Heart right ventricle (tissue), 16 donors: ENCODE measurements at regions of chr11 and their contacts with region 1.

Region 1: DNA sequence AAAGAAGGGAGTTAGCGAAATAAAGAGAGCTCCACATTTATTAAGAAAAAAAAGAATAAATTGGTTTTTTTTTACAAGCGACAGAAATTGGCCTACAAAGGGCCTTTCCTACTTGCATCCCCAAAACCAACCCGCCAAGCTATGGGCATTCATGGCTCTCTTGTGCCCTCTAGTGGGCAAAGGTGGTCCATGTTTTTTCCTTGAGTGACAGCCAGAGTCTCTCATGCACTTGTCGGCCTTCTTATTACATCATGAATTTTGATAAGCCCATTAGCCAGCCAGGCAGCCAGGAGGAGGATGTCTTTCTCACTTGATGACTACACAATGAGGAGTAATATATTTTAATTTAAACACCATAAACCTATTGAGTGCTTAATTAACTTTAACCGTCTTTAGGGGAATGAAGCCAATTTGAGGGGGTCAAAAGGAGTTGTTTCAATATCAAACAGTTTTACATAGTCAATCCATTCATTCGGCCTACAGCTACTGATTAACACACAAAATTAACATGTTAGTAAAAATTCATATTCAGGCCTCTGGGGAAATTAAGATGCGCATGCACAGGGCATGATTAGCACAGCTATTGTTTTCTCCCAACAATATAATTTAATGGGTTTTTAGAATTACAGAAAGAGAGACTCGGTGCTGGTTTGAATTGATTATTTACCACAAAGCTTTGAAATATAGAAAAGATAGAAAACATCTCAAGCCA is 85.5 kb downstream of the RCN1 start:
- DNase-seq: peak; percentile 27 to 82
- ATAC-seq: peak; percentile 52 to 80 (median 64)
- H3K4me3 ChIP-seq: no peak overlapping the region
- H3K27ac ChIP-seq: no peak overlapping the region
- H3K4me1 ChIP-seq: peaks cover 0 to 15% (median 5%) of the 10 kb centered on the region in 9 donors
- H3K27me3 ChIP-seq: peaks cover 0 to 10% (median 0%) of the 10 kb centered on the region in 7 donors
- CTCF ChIP-seq: peak; percentile 77 to 97 (median 89)

Region 2: DNA sequence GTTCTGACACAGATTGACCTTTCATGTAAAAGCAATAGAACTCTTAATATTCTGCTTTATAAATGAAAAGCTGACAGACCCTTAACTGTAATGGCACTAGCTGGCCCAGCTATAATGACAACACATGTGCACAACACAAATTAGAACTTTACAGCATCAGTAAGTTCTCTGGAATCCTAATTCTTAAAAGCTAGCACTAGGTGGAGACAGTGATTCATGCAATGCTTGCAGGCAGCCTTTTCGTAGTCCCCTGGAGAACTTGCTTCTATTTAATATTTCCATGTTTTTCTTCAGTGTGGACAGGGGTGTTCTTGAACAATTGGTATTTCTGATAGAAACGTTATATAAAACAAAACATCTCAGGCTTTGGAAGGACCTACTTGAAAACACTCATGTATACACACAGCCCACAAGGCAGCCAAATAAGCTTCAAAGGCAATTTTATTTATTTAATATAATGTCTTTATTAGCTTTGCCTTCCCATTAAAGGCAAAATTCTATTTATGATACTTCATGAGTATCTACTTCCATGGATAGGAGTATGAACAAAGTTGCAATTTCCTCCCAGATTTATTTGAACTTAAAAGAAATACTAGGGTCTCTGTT is 1215.9 kb before region 1 on chr11:
- intact Hi-C with region 1: loop called in 2 of 10 experiments (anchors 10 kb)
- DNase-seq: no peak
- ATAC-seq: peak in 1 of 8 donors; percentile 25
- H3K4me3 ChIP-seq: no peak overlapping the region
- H3K27ac ChIP-seq: no peak overlapping the region
- H3K4me1 ChIP-seq: no peaks in the 10 kb centered on the region
- H3K27me3 ChIP-seq: peaks cover 0 to 7% (median 0%) of the 10 kb centered on the region in 7 donors
- CTCF ChIP-seq: peak; percentile 15 to 73 (median 49)

Region 3: DNA sequence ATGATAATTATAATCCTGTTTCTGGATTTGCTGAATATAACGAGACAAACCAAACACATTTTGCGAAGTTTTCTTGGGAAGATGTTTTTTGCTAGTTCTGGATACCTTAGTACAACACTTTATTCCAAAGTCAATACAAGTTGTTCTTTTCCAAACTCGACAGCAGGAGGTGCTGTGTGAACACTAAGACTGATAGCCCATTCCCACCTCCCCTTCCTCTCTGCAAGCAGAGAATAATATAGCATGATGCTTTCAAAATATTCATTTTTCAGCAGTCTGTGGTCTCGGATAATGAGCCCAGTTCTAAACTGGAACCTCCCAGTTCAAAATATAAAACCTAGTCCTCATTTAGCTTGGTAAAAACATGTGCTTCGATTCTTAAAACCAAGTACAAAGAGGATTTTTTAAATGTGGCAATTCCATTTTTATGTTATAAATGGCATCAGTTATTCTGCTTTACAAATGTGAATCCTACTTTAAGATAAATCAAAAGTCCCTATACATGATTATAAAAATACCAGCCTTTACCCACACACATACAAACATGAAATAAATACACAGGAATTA is 936.0 kb before region 1 on chr11:
- intact Hi-C with region 1: loop called in 7 of 10 experiments (anchors 2 to 10 kb)
- DNase-seq: peak in 1 of 2 donors; percentile 9
- ATAC-seq: peak in 1 of 8 donors; percentile 53
- H3K4me3 ChIP-seq: no peak overlapping the region
- H3K27ac ChIP-seq: no peak overlapping the region
- H3K4me1 ChIP-seq: no peaks in the 10 kb centered on the region
- H3K27me3 ChIP-seq: no peaks in the 10 kb centered on the region
- CTCF ChIP-seq: peak in 7 of 9 donors; percentile 44 to 66 (median 59)

Region 4: DNA sequence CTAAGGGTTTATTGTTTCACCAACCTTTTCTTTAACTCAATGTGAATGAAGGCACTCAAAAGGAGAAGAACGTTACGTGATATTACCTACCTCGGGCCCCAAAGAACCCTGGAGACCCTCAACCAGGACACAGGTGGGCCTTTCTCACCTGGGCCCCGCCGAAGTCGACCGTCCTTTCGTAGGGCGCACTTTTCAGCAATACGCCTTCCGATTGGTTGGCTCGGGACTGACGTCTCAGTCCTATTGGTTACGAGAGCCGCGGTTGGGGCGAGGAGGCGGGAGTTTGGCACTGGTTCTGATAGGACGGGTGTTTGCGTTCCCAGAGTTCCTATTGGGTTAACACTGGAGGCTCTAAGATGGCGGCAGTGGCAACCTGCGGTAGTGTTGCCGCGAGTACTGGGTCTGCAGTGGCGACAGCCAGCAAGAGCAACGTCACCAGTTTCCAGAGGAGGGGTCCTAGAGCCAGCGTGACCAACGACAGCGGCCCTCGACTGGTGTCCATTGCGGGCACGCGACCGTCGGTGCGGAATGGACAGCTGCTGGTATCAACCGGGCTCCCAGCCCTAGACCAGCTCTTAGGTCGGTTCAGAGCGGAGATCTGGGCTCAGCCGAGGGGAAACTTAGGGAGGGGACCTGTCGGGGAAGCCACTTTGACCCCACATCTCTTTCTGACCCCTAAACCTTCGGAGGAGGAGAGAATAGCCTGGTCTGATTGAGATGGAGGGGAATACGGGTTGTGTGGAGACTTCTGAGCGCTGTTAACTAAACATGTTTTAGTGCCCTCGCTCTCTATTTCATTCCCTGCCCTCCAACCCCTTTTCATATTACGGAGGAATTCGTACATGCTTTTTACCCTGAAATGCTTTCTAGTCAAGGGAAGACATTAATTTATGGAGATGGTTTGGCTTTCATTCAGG is 666.7 kb before region 1 on chr11 and contains the starts of genes ELP4 and IMMP1L:
- intact Hi-C with region 1: loop called in 1 of 10 experiments (anchors 10 kb)
- DNase-seq: peak; percentile 92 to 98
- ATAC-seq: peak; percentile 100
- H3K4me3 ChIP-seq: peak within 1 kb of the TSS; percentile 68 to 95 (median 81)
- H3K27ac ChIP-seq: peak within 1 kb of the TSS; percentile 37 to 89 (median 84)
- H3K4me1 ChIP-seq: peaks cover 0 to 29% (median 24%) of the 10 kb centered on the region in 9 donors
- H3K27me3 ChIP-seq: no peaks in the 10 kb centered on the region
- CTCF ChIP-seq: no peak
- total RNA-seq, gene ELP4: 13.4 to 19.5 (median 15.9) TPM
- total RNA-seq, gene IMMP1L: 19.5 to 32.4 (median 28.8) TPM

Region 5: GRCh38 chr11:32065865-32066264 is 110.5 kb before region 1 on chr11:
- intact Hi-C with region 1: no loop called
- DNase-seq: no peak
- ATAC-seq: no peak
- H3K4me3 ChIP-seq: no peak overlapping the region
- H3K27ac ChIP-seq: no peak overlapping the region
- H3K4me1 ChIP-seq: no peaks in the 10 kb centered on the region
- H3K27me3 ChIP-seq: peaks cover 0 to 62% (median 32%) of the 10 kb centered on the region in 7 donors
- CTCF ChIP-seq: no peak

Region 6: GRCh38 chr11:32090545-32091373 is 85.6 kb before region 1 on chr11 and contains the start of gene RCN1:
- intact Hi-C with region 1: loop called in 1 of 10 experiments (anchors 2 kb)
- DNase-seq: peak; percentile 66 to 74
- ATAC-seq: peak; percentile 86 to 95 (median 90)
- H3K4me3 ChIP-seq: peak within 1 kb of the TSS; percentile 58 to 94 (median 79)
- H3K27ac ChIP-seq: peak within 1 kb of the TSS; percentile 49 to 96 (median 90)
- H3K4me1 ChIP-seq: peaks cover 5 to 54% (median 37%) of the 10 kb centered on the region in 9 donors
- H3K27me3 ChIP-seq: no peaks in the 10 kb centered on the region
- CTCF ChIP-seq: peak in 1 of 9 donors; percentile 3
- total RNA-seq, gene RCN1: 9.7 to 60.4 (median 19.2) TPM

Region 7: GRCh38 chr11:32198053-32198452 is 21.7 kb after region 1 on chr11:
- intact Hi-C with region 1: no loop called
- DNase-seq: no peak
- ATAC-seq: no peak
- H3K4me3 ChIP-seq: no peak overlapping the region
- H3K27ac ChIP-seq: no peak overlapping the region
- H3K4me1 ChIP-seq: no peaks in the 10 kb centered on the region
- H3K27me3 ChIP-seq: peaks cover 0 to 30% (median 18%) of the 10 kb centered on the region in 7 donors
- CTCF ChIP-seq: no peak